ENCODE measurements at regions of chr12 and their contacts with region 1.

Region 1: DNA sequence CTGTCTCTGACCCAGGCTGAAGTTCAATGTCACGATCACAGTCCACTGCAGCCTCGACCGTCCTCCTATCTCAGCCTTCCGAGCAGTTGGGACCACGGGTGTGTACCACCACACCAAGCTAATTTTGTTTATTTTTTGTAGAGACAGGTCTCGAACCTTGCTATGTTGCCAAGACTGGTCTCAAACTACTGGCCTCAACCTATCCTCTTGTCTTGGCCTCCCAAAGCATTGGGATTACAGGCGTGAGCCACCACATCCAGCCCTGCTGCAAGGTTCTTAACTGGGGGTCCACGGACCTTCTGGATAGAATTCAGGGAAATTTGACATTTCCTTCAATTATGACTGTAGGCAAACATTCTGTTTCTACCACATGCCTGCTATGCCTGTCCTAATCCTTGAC is 36.9 kb downstream of the ZCCHC8 start:
- DNase-seq: no peak
- H3K4me3 Mint-ChIP-seq: no peak overlapping the region
- H3K27ac Mint-ChIP-seq: peak overlapping the region; percentile 94
- H3K4me1 Mint-ChIP-seq: no peaks in the 10 kb centered on the region
- H3K27me3 Mint-ChIP-seq: no peaks in the 10 kb centered on the region
- CTCF ChIP-seq: no peak

Region 2: GRCh38 chr12:122421821-122422729 is 41.7 kb before region 1 on chr12 and contains the start of gene CLIP1:
- CTCF ChIA-PET with region 1: interaction called, 3 read pairs
- intact Hi-C with region 1: loop called (anchors 5 kb)
- DNase-seq: peak; percentile 87
- H3K4me3 Mint-ChIP-seq: peak within 1 kb of the TSS; percentile 83
- H3K27ac Mint-ChIP-seq: peak within 1 kb of the TSS; percentile 96
- H3K4me1 Mint-ChIP-seq: peaks cover 18% of the 10 kb centered on the region
- H3K27me3 Mint-ChIP-seq: no peaks in the 10 kb centered on the region
- CTCF ChIP-seq: no peak
- total RNA-seq, gene CLIP1: 95.3 and 109 TPM in 2 replicates

Region 3: GRCh38 chr12:122545855-122546254 is 82.0 kb after region 1 on chr12:
- CTCF ChIA-PET with region 1: no interaction called
- intact Hi-C with region 1: no loop called
- DNase-seq: no peak
- H3K4me3 Mint-ChIP-seq: no peak overlapping the region
- H3K27ac Mint-ChIP-seq: no peak overlapping the region
- H3K4me1 Mint-ChIP-seq: no peaks in the 10 kb centered on the region
- H3K27me3 Mint-ChIP-seq: no peaks in the 10 kb centered on the region
- CTCF ChIP-seq: no peak